GM12878 (cell line): ENCODE measurements at regions of chr6 and their contacts with region 1.

Region 1: GRCh38 chr6:129606664-129607063 is 103.3 kb downstream of the ARHGAP18 start:
- DNase-seq: peak; percentile 59
- ATAC-seq: peak; percentile 87
- H3K4me3 ChIP-seq: no peak overlapping the region
- H3K27ac ChIP-seq: peak overlapping the region; percentile 80
- H3K4me1 ChIP-seq: peaks cover 31% of the 10 kb centered on the region
- H3K27me3 ChIP-seq: no peaks in the 10 kb centered on the region
- CTCF ChIP-seq: no peak
- EP300 ChIP-seq: peak; percentile 34 to 51; a peak in 2 of 4 replicates
- POLR2A ChIP-seq: no peak
- RAD21 ChIP-seq: 0 out of 2 replicates have a peak, but pooled peaks have one; percentile 11

Region 2: DNA sequence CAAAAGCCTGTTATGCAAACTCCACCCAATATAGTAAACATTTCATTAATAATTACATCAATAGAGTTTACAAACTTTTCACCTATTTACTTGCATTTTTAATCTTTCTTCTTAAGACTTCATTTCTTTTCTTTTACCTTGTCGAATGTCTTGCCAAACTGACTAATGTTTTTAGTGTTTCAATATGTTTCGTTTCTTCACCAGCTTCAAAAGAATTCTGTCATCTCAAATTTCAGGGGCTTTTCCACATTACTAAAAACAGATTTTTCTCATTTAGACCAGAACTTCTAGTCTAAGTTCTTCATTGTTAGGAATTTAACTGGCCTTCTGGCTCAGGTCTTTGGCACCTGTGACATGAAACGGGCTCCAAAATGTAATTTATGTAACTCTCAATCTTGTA is 93.2 kb before region 1 on chr6:
- CTCF ChIA-PET with region 1: no interaction called
- POLR2A ChIA-PET with region 1: no interaction called
- RAD21 ChIA-PET with region 1: no interaction called
- SMC1A ChIA-PET with region 1: no interaction called
- in situ Hi-C with region 1: no loop called
- intact Hi-C with region 1: no loop called
- DNase-seq: no peak
- ATAC-seq: no peak
- H3K4me3 ChIP-seq: no peak overlapping the region
- H3K27ac ChIP-seq: no peak overlapping the region
- H3K4me1 ChIP-seq: no peaks in the 10 kb centered on the region
- H3K27me3 ChIP-seq: no peaks in the 10 kb centered on the region
- CTCF ChIP-seq: no peak
- EP300 ChIP-seq: no peak
- POLR2A ChIP-seq: no peak
- RAD21 ChIP-seq: no peak

Region 3: DNA sequence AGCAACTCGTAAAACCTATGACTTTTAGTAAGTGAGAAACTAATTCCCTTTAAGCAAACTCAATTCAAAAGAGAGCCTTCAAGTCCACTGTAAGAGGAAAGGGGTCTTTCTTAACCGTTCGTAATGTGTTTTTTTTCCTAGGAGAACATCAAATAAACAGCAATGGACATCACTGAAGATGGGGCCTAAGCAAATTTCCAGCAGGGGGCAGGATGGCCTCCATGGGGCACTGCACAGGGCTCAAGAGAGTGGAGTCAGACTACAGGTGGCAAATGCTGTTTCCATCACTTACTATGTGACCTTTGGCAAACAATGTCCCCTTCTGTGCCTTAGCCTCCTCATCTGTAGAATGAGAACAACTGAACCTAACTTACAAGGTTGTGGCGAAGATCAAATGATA is 14.6 kb after region 1 on chr6:
- CTCF ChIA-PET with region 1: interaction called, 4 read pairs
- POLR2A ChIA-PET with region 1: interaction called, 3 read pairs
- RAD21 ChIA-PET with region 1: interaction called, 3 read pairs
- SMC1A ChIA-PET with region 1: interaction called, 15 read pairs
- in situ Hi-C with region 1: no loop called
- intact Hi-C with region 1: no loop called
- DNase-seq: no peak
- ATAC-seq: peak; percentile 74
- H3K4me3 ChIP-seq: no peak overlapping the region
- H3K27ac ChIP-seq: no peak overlapping the region
- H3K4me1 ChIP-seq: no peaks in the 10 kb centered on the region
- H3K27me3 ChIP-seq: no peaks in the 10 kb centered on the region
- CTCF ChIP-seq: peak; percentile 29 to 50 (median 37); a peak in 4 of 6 replicates
- EP300 ChIP-seq: no peak
- POLR2A ChIP-seq: no peak
- RAD21 ChIP-seq: 0 out of 2 replicates have a peak, but pooled peaks have one; percentile 7

Region 4: GRCh38 chr6:129661536-129662405 is 55.1 kb after region 1 on chr6:
- CTCF ChIA-PET with region 1: interaction called, 3 read pairs
- POLR2A ChIA-PET with region 1: interaction called, 5 read pairs
- RAD21 ChIA-PET with region 1: interaction called, 4 read pairs
- SMC1A ChIA-PET with region 1: interaction called, 4 read pairs
- in situ Hi-C with region 1: no loop called
- intact Hi-C with region 1: loop called (anchors 5 kb)
- DNase-seq: no peak
- ATAC-seq: peak; percentile 40
- H3K4me3 ChIP-seq: peak overlapping the region; percentile 7; the same call in 1 of the 2 replicates
- H3K27ac ChIP-seq: peak overlapping the region; percentile 89
- H3K4me1 ChIP-seq: peaks cover 44% of the 10 kb centered on the region
- H3K27me3 ChIP-seq: no peaks in the 10 kb centered on the region
- CTCF ChIP-seq: no peak
- EP300 ChIP-seq: peak in 1 of 2 experiments; percentile 61; a peak in 1 of 4 replicates
- POLR2A ChIP-seq: no peak
- RAD21 ChIP-seq: no peak

Region 5: DNA sequence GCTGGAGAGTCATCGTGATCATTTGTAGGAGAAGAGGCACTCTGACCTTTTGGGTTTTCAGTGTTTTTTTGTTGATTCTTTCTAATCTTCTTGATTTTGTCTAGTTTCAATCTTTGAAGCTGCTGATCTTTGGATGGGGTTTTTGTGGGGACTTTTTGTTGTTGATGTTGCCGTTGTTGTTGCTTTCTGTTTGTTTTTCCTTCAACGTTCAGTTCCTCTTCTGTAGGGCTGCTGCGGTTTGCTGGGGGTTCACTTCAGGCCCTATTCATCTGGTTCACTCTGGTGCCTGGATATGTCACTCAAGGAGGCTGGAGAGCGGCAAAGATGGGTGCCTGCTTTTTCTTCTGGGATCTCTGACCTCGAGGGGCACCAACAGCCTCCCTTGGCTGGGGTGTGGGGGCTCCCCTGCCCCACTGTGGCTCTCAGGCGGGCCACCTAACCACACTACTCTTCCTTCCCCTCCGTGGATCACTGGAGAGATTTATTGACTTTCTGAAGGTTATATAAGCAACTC is 275.9 kb after region 1 on chr6:
- CTCF ChIA-PET with region 1: no interaction called
- POLR2A ChIA-PET with region 1: interaction called, 5 read pairs
- RAD21 ChIA-PET with region 1: no interaction called
- SMC1A ChIA-PET with region 1: interaction called, 3 read pairs
- in situ Hi-C with region 1: no loop called
- intact Hi-C with region 1: loop called (anchors 5 kb)
- DNase-seq: peak; percentile 74
- ATAC-seq: peak; percentile 96
- H3K4me3 ChIP-seq: peak overlapping the region; percentile 13; the same call in 1 of the 2 replicates
- H3K27ac ChIP-seq: peak overlapping the region; percentile 81
- H3K4me1 ChIP-seq: peaks cover 6% of the 10 kb centered on the region
- H3K27me3 ChIP-seq: no peaks in the 10 kb centered on the region
- CTCF ChIP-seq: no peak
- EP300 ChIP-seq: peak; percentile 63 to 80
- POLR2A ChIP-seq: no peak
- RAD21 ChIP-seq: no peak